ENCODE measurements at regions of chrX and their contacts with region 1.

Region 1: GRCh38 chrX:154097597-154098541 is at the start of gene MECP2:
- DNase-seq: peak; percentile 78 to 93 (median 90)
- H3K4me3 ChIP-seq: peak within 1 kb of the TSS; percentile 46 to 78 (median 66)
- H3K27ac ChIP-seq: peak within 1 kb of the TSS; percentile 66 to 99 (median 95)
- H3K27me3 ChIP-seq: peaks cover 0 to 67% (median 10%) of the 10 kb centered on the region in 45 donors
- CTCF ChIP-seq: peak in 3 of 56 donors; percentile 18 to 24 (median 19)
- total RNA-seq, gene MECP2: 75.9 to 123 (median 90.3) TPM

Region 2: GRCh38 chrX:153959649-153960048 is 138.2 kb before region 1 on chrX:
- intact Hi-C with region 1: no loop called
- DNase-seq: no peak
- H3K4me3 ChIP-seq: no peak overlapping the region
- H3K27ac ChIP-seq: no peak overlapping the region
- H3K27me3 ChIP-seq: peaks cover 0 to 41% (median 0%) of the 10 kb centered on the region in 45 donors
- CTCF ChIP-seq: no peak

Region 3: GRCh38 chrX:153971450-153972367 is 126.2 kb before region 1 on chrX and contains the start of gene HCFC1:
- intact Hi-C with region 1: loop called in 1 of 2 experiments (anchors 5 kb)
- DNase-seq: peak; percentile 83 to 92 (median 89)
- H3K4me3 ChIP-seq: peak within 1 kb of the TSS; percentile 54 to 94 (median 77)
- H3K27ac ChIP-seq: peak within 1 kb of the TSS; percentile 97 to 100 (median 99)
- H3K27me3 ChIP-seq: peaks cover 0 to 23% (median 0%) of the 10 kb centered on the region in 45 donors
- CTCF ChIP-seq: no peak
- total RNA-seq, gene HCFC1: 41.2 to 97.5 (median 57.4) TPM

Region 4: GRCh38 chrX:154019633-154020528 is 78.0 kb before region 1 on chrX and contains the start of gene IRAK1:
- intact Hi-C with region 1: loop called (anchors 2 to 5 kb)
- DNase-seq: peak in 4 of 10 donors; percentile 31 to 71 (median 40)
- H3K4me3 ChIP-seq: peak within 1 kb of the TSS; percentile 34 to 71 (median 58)
- H3K27ac ChIP-seq: peak within 1 kb of the TSS in 58 of 59 donors; percentile 7 to 92 (median 82)
- H3K27me3 ChIP-seq: peaks cover 0 to 63% (median 10%) of the 10 kb centered on the region in 45 donors
- CTCF ChIP-seq: peak in 3 of 56 donors; percentile 10 to 35 (median 19)
- total RNA-seq, gene IRAK1: 27.2 to 130 (median 49.0) TPM

Region 5: DNA sequence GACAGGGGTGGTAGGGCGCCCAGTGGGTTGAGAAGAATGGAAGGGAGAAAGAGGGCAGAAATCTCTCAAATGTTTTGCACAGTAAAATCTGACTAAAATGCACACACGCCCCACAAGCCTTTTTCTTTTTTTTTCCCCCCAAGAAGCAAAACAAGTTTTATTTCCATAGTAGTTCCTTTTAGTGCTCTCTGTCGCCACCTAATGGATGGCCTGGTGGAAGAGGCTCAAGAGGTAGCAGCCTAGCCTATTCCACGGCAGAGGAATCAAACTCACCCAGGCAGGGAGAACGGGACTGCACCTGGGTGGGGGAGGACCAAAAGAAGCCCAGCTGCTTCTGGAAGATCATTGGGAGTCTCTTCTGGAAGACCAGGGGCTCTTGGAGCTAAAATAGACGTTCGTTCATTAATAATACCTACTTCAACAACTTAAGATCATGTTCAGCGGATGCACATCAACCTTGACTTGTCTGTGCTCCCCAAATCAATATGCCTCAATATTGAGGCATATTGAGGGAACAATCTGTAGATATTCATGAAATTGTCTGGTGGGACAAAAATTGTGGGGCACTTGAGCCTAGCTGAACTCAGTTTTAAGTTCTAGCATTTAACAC is 46.6 kb before region 1 on chrX:
- intact Hi-C with region 1: loop called in 1 of 2 experiments (anchors 5 kb)
- DNase-seq: peak in 8 of 10 donors; percentile 35 to 82 (median 66)
- H3K4me3 ChIP-seq: no peak overlapping the region
- H3K27ac ChIP-seq: peak overlapping the region in 4 of 59 donors; percentile 2 to 51 (median 15)
- H3K27me3 ChIP-seq: peaks cover 0 to 63% (median 6%) of the 10 kb centered on the region in 45 donors
- CTCF ChIP-seq: peak; percentile 18 to 81 (median 70)

Region 6: DNA sequence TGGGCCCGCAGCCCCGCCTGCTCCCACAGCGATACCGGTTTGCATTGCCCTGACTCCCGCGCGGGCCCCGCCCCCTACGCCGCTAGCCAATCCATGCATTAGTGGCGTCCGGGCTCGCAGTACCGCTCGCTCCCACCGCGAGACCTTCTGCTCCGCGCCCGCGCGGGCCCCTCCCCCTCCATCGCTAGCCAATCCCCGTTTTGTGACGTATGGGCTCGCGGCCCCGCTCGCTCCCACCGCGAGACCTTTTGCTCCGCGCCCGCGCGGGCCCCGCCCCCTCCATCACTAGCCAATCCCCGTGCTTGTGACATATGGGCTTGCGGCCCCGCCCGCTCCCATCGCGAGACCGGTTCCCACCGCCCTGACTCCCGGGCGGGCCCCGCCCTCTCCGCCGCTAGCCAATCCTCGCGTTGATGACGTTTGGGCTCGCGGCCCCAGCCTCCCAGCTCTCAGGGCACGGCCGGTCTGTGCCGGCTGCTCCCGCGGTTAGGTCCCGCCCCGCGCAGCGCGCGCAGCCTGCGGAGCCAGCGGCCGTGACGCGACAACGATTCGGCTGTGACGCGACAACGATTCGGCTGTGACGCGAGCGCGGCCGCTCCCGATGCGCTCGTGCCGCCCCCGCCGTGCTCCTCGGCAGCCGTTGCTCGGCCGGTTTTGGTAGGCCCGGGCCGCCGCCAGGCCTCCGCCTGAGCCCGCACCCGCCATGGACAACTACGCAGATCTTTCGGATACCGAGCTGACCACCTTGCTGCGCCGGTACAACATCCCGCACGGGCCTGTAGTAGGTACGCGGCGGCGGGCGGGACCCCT is 281.1 kb after region 1 on chrX and contains the start of gene EMD:
- intact Hi-C with region 1: loop called in 1 of 2 experiments (anchors 10 kb)
- DNase-seq: peak; percentile 91 to 98 (median 97)
- H3K4me3 ChIP-seq: peak within 1 kb of the TSS; percentile 34 to 87 (median 77)
- H3K27ac ChIP-seq: peak within 1 kb of the TSS; percentile 74 to 99 (median 96)
- H3K27me3 ChIP-seq: peaks cover 0 to 30% (median 3%) of the 10 kb centered on the region in 45 donors
- CTCF ChIP-seq: peak in 11 of 56 donors; percentile 3 to 27 (median 16)
- total RNA-seq, gene EMD: 21.9 to 72.7 (median 41.5) TPM